Transverse colon (tissue), 4 donors: ENCODE measurements at regions of chr4 and their contacts with region 1.

Region 1: DNA sequence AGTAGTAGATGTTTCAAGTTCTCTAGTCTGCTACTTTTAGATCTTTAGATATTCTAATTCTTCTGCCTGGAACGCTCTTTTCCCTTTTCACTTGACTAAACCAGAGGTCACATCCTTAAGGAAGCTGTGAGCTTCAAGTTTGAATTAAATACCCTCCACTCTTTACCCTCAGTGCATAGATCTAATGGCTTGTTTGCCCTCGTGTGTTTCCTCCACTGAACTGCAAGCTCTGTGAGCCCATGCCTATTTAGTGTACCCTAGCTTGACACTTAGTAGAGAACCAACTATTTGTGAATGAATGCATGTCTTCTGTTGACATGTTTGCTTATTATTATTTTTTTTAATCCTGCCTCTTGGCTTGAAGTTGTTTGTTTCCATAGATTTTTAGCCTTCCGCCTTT is 138.3 kb downstream of the PDE5A start:
- DNase-seq: peak; percentile 10
- H3K4me3 ChIP-seq: no peak overlapping the region
- H3K27ac ChIP-seq: no peak overlapping the region
- H3K4me1 ChIP-seq: no peaks in the 10 kb centered on the region
- H3K27me3 ChIP-seq: no peaks in the 10 kb centered on the region
- CTCF ChIP-seq: peak; percentile 21 to 47 (median 38)
- EP300 ChIP-seq: no peak
- POLR2A ChIP-seq: no peak

Region 2: DNA sequence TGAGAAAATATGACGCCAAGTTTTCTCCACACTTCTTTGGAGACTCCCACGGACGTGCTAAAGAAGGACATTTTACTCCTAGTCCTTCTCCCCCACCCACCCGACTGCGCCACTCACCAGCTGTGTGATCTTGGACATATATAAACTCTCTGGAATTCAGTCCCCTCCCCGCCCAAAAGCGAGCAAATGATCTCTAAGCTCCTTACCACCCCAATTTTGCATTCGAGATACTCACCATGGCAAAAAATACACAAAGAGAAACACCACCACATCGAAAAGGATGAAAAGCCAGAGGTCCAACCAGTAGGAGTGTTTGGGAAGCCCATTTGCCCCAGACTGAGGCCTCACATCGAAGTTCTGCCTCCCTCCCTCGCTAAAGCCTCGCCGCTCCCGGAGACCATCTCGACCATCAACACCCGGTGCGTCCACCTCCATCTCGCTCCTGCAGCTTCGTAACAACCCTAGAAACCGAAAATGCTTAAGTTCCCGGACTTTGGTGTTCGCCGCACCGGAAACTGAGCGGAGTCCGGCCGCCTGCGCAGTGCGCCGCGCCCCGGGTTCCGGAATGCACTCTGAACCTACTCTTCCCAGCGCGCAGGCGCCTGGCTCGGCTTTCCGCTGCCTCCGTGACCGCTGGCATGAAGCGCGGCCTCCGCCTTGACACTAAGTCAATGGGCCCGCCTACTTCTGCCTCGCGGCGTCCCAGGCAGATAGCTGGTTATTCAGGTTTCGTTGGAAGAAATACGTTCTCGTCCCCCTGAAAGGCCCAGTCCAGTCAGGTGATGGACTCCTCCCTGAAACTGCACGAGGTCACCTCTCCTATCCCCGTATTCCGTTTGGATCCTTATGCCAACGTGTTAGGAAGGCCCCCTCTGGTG is 190.0 kb before region 1 on chr4:
- in situ Hi-C with region 1: loop called in 1 of 4 experiments (anchors 25 kb)
- intact Hi-C with region 1: no loop called
- DNase-seq: peak; percentile 97
- H3K4me3 ChIP-seq: peak overlapping the region; percentile 39 to 85 (median 62)
- H3K27ac ChIP-seq: peak overlapping the region; percentile 94 to 97 (median 94)
- H3K4me1 ChIP-seq: peaks cover 6 to 30% (median 27%) of the 10 kb centered on the region in 4 donors
- H3K27me3 ChIP-seq: no peaks in the 10 kb centered on the region
- CTCF ChIP-seq: peak in 2 of 5 experiments; percentile 9 to 40
- EP300 ChIP-seq: peak; percentile 7
- POLR2A ChIP-seq: peak; percentile 91